Aorta (tissue), 5 donors: ENCODE measurements at regions of chr6 and their contacts with region 1.

Region 1: DNA sequence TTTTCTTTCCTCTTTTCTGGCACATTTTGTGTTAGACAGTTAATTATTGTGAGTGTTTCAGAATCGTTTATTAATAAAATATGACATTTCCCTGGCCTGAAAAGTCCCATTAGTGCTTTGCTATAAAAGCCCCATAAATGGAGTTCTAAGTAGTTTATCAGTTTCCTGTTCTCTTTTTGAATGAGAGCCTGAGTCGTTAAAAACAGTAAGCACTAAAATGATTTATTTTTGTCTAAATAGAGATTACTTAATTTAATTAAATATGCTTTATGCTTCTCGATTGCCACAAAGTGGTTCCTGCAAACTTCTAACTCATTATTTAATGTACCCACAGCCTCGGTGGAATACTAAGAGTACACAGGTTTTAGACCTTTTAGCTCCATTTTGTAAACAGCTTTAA is 577.9 kb downstream of the C6orf118 start:
- DNase-seq: no peak
- ATAC-seq: no peak
- H3K4me3 ChIP-seq: no peak overlapping the region
- H3K27ac ChIP-seq: no peak overlapping the region
- H3K4me1 ChIP-seq: no peaks in the 10 kb centered on the region
- H3K27me3 ChIP-seq: no peaks in the 10 kb centered on the region

Region 2: GRCh38 chr6:164792666-164793065 is 61.1 kb after region 1 on chr6:
- intact Hi-C with region 1: loop called in 1 of 2 experiments (anchors 2 kb)
- DNase-seq: no peak
- ATAC-seq: no peak
- H3K4me3 ChIP-seq: no peak overlapping the region
- H3K27ac ChIP-seq: no peak overlapping the region
- H3K4me1 ChIP-seq: peaks cover 0 to 2% of the 10 kb centered on the region in 2 donors
- H3K27me3 ChIP-seq: no peaks in the 10 kb centered on the region